CD4-positive, alpha-beta memory T cell (primary cell): ENCODE measurements at regions of chr2 and their contacts with region 1.

Region 1: GRCh38 chr2:130342533-130343275 is at the start of gene IMP4:
- DNase-seq: peak; percentile 96 to 99 (median 97)
- H3K4me3 ChIP-seq: peak within 1 kb of the TSS; percentile 70 to 76
- H3K4me3 Mint-ChIP-seq: peak within 1 kb of the TSS; percentile 99 to 100 (median 100)
- H3K27ac ChIP-seq: peak within 1 kb of the TSS; percentile 96
- H3K27ac Mint-ChIP-seq: peak within 1 kb of the TSS; percentile 95 to 100 (median 99)
- H3K4me1 ChIP-seq: peaks cover 25% of the 10 kb centered on the region
- H3K4me1 Mint-ChIP-seq: peaks cover 22 to 56% (median 39%) of the 10 kb centered on the region in 4 donors
- H3K27me3 ChIP-seq: no peaks in the 10 kb centered on the region
- H3K27me3 Mint-ChIP-seq: no peaks in the 10 kb centered on the region
- total RNA-seq, gene IMP4: 72.6 to 73.9 TPM

Region 2: DNA sequence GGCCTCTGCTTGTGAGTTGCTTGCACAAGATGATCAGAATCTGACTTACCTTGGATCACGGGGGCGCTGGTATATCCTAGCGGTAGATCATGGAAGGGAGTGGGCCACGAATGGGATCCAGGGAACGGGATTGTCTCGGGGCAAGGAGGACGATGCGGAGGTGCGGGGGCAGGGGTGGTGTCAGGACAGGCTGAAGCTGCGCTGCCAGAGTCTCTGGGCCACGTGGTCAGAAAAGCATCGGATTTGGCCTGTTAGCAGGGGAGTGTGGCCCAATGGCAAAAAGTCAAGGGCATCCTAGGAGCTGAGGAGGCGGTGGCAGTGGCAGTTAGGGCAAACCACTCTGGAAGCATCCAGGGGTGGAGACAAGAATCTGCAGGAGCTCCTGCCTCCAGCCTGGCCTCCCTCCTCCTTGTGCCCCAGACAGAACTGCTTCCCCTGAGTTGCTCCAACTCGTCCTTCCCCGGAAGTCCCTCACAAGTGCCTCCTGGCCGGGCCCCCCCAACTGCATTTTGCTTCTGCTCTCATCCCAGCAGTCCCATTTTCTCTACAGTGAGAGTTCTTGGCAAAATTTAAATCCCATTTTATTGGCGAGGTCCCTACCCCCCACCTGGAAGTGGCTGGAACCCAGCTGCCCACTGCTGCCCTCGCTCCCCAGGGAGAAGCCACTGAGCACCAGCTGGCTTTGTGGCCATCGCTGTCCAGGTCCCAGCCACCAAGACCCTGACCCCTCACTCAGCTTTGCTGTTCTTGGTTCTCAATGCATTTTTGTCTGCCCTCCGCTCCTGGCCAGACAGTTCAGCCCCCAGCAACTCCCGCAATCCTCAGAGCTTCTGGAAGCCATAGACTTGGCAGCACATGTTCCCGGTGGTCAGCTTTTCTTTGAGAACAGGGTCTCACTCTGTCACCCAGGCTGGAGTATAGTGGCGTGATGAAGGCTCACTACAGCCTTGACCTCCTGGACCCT is 192.2 kb before region 1 on chr2:
- CTCF ChIA-PET with region 1: no interaction called
- POLR2A ChIA-PET with region 1: no interaction called
- intact Hi-C with region 1: loop called (anchors 10 kb)
- DNase-seq: no peak
- H3K4me3 ChIP-seq: no peak overlapping the region
- H3K4me3 Mint-ChIP-seq: no peak overlapping the region
- H3K27ac ChIP-seq: no peak overlapping the region
- H3K27ac Mint-ChIP-seq: peak overlapping the region in 1 of 7 donors; percentile 66
- H3K4me1 ChIP-seq: no peaks in the 10 kb centered on the region
- H3K4me1 Mint-ChIP-seq: no peaks in the 10 kb centered on the region
- H3K27me3 ChIP-seq: no peaks in the 10 kb centered on the region
- H3K27me3 Mint-ChIP-seq: no peaks in the 10 kb centered on the region

Region 3: GRCh38 chr2:130332271-130333073 is 10.2 kb before region 1 on chr2:
- CTCF ChIA-PET with region 1: interaction called, 64 read pairs
- POLR2A ChIA-PET with region 1: interaction called, 17 read pairs
- intact Hi-C with region 1: no loop called
- DNase-seq: peak; percentile 54 to 64 (median 60)
- H3K4me3 ChIP-seq: no peak overlapping the region
- H3K4me3 Mint-ChIP-seq: peak overlapping the region in 7 of 8 donors; percentile 16 to 63 (median 54)
- H3K27ac ChIP-seq: no peak overlapping the region
- H3K27ac Mint-ChIP-seq: peak overlapping the region in 2 of 7 donors; percentile 24 to 58
- H3K4me1 ChIP-seq: peaks cover 4% of the 10 kb centered on the region
- H3K4me1 Mint-ChIP-seq: peaks cover 3 to 17% (median 7%) of the 10 kb centered on the region in 4 donors
- H3K27me3 ChIP-seq: no peaks in the 10 kb centered on the region
- H3K27me3 Mint-ChIP-seq: peaks cover 14 to 21% of the 10 kb centered on the region in 2 donors

Region 4: DNA sequence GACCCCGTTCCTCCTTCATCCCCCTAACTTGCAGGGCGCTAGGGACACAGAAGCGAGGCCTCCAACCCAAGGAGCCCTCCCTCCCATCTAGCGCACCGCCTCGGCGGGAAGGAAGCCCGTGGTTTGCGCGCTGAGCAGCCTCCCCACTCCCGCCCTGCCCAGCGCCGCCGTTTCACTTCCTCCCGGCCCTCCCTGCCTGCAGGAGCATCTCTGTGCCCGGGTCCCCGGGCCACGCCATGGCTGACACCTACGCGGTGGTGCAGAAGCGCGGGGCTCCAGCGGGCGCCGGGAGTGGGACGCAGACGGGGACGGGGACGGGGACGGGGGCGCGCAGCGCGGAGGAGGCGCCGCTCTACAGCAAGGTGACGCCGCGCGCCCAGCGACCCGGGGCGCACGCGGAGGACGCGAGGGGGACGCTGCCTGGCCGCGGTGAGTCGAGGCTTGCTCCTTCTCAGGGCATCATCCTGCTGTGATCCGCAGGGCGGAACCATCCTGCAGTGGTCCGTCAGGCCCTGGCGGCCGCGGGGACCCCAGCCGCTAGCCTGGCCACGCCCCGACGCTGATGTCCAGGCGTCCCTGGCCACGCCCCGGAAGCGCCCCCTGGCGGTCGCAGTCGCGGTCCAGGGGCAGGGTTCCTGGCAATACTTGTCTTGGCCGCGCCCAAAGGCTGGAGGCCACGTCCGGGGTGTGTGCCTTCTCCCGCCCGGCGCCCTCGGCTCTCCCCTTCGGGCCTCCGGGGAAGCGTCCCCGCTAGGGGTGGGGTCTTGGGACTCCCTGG is 29.5 kb after region 1 on chr2:
- CTCF ChIA-PET with region 1: interaction called, 33 read pairs
- POLR2A ChIA-PET with region 1: interaction called, 89 read pairs
- intact Hi-C with region 1: loop called (anchors 1 kb)
- DNase-seq: peak; percentile 65 to 76 (median 74)
- H3K4me3 ChIP-seq: peak overlapping the region; percentile 77 to 88
- H3K4me3 Mint-ChIP-seq: peak overlapping the region; percentile 92 to 98 (median 95)
- H3K27ac ChIP-seq: peak overlapping the region; percentile 57
- H3K27ac Mint-ChIP-seq: peak overlapping the region; percentile 90 to 98 (median 97)
- H3K4me1 ChIP-seq: peaks cover 64% of the 10 kb centered on the region
- H3K4me1 Mint-ChIP-seq: peaks cover 51 to 73% (median 64%) of the 10 kb centered on the region in 4 donors
- H3K27me3 ChIP-seq: no peaks in the 10 kb centered on the region
- H3K27me3 Mint-ChIP-seq: no peaks in the 10 kb centered on the region

Region 5: DNA sequence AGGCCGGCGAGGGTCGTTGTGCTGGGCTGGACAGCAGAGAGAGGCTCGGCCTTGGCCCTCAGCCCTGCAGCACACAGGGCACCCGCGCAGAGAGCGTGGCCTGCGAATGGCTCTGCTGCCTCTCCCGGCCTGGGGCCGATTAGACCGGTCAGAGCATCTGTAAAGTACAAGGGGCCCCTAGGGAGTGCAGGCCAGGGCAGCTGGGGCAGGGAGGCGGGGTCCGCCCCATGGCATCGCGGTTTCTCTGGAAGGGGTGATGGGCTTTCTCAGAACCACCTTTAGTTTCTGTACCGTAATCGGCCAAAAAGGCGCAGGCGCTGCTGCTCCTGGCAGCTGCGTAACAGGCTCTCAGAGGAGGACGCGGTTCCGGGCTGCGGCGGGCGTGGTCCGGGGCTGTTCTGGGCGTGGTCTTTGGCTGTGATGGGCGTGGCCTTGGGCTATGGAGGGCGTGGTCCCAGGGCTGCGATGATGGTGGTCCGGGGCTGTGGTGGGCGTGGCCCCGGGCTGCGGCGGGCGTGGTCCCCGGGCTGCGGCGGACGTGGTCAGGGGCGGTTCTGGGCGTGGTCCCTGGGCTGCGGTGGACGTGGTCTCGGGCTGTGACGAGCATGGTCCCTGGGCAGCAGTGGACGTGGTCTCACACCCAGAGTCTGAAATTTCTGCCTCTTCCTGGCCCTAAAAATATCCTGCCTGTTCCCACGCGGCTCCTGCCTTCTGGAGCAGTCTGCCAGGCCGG is 384.7 kb after region 1 on chr2:
- CTCF ChIA-PET with region 1: no interaction called
- POLR2A ChIA-PET with region 1: interaction called, 13 read pairs
- intact Hi-C with region 1: loop called (anchors 5 kb)
- DNase-seq: peak; percentile 90 to 95 (median 92)
- H3K4me3 ChIP-seq: peak overlapping the region; percentile 81 to 83
- H3K4me3 Mint-ChIP-seq: peak overlapping the region; percentile 85 to 92 (median 88)
- H3K27ac ChIP-seq: peak overlapping the region; percentile 80
- H3K27ac Mint-ChIP-seq: peak overlapping the region; percentile 89 to 97 (median 95)
- H3K4me1 ChIP-seq: peaks cover 22% of the 10 kb centered on the region
- H3K4me1 Mint-ChIP-seq: peaks cover 5 to 34% (median 17%) of the 10 kb centered on the region in 4 donors
- H3K27me3 ChIP-seq: no peaks in the 10 kb centered on the region
- H3K27me3 Mint-ChIP-seq: no peaks in the 10 kb centered on the region

Region 6: GRCh38 chr2:131093006-131093695 is 750.4 kb after region 1 on chr2 and contains the start of gene FAM168B:
- CTCF ChIA-PET with region 1: no interaction called
- POLR2A ChIA-PET with region 1: interaction called, 23 read pairs
- intact Hi-C with region 1: no loop called
- DNase-seq: peak; percentile 86 to 93 (median 91)
- H3K4me3 ChIP-seq: peak within 1 kb of the TSS; percentile 86 to 91
- H3K4me3 Mint-ChIP-seq: peak within 1 kb of the TSS; percentile 85 to 99 (median 93)
- H3K27ac ChIP-seq: peak within 1 kb of the TSS; percentile 89
- H3K27ac Mint-ChIP-seq: peak within 1 kb of the TSS; percentile 92 to 98 (median 97)
- H3K4me1 ChIP-seq: peaks cover 22% of the 10 kb centered on the region
- H3K4me1 Mint-ChIP-seq: peaks cover 12 to 38% (median 22%) of the 10 kb centered on the region in 4 donors
- H3K27me3 ChIP-seq: no peaks in the 10 kb centered on the region
- H3K27me3 Mint-ChIP-seq: no peaks in the 10 kb centered on the region
- total RNA-seq, gene FAM168B: 79.4 to 81.0 TPM

Region 7: GRCh38 chr2:131492418-131493198 is 1149.9 kb after region 1 on chr2:
- CTCF ChIA-PET with region 1: interaction called, 6 read pairs
- POLR2A ChIA-PET with region 1: interaction called, 9 read pairs
- intact Hi-C with region 1: loop called (anchors 5 kb)
- DNase-seq: peak; percentile 93 to 98 (median 95)
- H3K4me3 ChIP-seq: peak overlapping the region; percentile 90 to 93
- H3K4me3 Mint-ChIP-seq: peak overlapping the region; percentile 93 to 99 (median 96)
- H3K27ac ChIP-seq: peak overlapping the region; percentile 94
- H3K27ac Mint-ChIP-seq: peak overlapping the region; percentile 97 to 100 (median 99)
- H3K4me1 ChIP-seq: peaks cover 38% of the 10 kb centered on the region
- H3K4me1 Mint-ChIP-seq: peaks cover 15 to 56% (median 37%) of the 10 kb centered on the region in 4 donors
- H3K27me3 ChIP-seq: no peaks in the 10 kb centered on the region
- H3K27me3 Mint-ChIP-seq: no peaks in the 10 kb centered on the region